Activated CD4-positive, alpha-beta memory T cell treated with anti-CD3 and anti-CD28 coated beads for 36 hours (primary cell): ENCODE measurements at regions of chr10 and their contacts with region 1.

Region 1: DNA sequence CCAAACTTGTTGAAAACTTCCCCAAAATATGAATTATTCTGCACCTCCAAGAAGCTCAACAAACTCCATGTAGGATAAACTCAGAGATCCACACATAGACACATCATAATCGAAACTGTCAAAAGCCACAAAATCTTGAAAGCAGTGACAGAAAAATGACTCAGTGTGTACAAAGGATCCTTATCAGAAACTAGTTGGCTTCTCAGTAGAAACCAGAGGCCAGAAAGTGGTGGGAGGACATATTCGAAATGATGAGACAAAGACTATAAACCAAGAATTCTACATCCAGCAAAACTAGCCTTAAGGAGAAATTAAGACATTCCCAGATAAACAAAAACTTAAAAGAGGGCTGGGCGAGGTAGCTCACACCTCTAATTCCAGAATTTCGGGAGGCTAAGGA is 38.5 kb downstream of the MCMBP start:
- DNase-seq: no peak
- H3K4me3 Mint-ChIP-seq: no peak overlapping the region
- H3K27ac Mint-ChIP-seq: peak overlapping the region; percentile 52
- H3K4me1 Mint-ChIP-seq: peaks cover 43% of the 10 kb centered on the region
- H3K27me3 Mint-ChIP-seq: no peaks in the 10 kb centered on the region

Region 2: DNA sequence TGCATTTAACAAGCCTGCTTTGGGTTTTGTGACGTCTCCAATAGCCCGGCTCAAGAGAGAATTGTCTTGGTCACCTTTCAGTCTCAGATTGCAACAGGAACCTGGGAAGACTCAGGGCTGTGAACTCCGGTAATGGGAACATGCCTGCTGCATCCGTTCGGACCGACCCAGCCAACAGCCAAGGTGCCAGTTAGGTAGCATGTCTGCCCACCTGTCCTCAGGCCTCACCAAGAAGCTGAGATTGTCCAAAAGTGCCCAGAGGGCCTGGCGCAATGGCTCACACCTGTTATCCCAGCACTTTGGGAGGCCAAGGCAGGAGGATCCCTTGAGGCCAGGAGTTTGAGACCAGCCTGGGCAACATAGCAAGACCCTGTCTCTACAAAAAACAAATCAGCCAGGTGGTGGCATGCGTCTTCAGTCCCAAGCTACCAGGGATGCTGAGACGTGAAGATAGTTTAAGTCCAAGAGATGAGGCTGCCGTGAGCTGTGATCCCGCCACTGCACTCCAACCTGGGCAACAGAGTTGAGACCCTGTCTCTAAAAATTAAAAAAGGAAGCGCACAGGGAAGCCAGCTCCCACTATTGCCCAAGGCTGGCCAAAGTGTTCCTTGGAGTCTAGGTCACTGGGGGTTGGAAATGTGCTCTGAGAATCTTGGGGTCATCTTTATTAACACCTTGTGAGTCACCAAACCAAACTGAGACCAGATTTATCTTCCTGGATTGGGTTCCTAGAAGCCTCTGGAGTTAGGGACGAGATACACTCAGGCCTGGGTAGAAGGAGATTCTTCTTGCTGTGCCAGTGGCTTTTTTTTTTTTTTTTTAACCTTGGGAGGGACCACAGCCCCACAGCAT is 156.1 kb before region 1 on chr10:
- CTCF ChIA-PET with region 1: interaction called, 3 read pairs
- POLR2A ChIA-PET with region 1: no interaction called
- intact Hi-C with region 1: loop called (anchors 2 kb)
- DNase-seq: no peak
- H3K4me3 Mint-ChIP-seq: no peak overlapping the region
- H3K27ac Mint-ChIP-seq: no peak overlapping the region
- H3K4me1 Mint-ChIP-seq: peaks cover 33% of the 10 kb centered on the region
- H3K27me3 Mint-ChIP-seq: no peaks in the 10 kb centered on the region

Region 3: GRCh38 chr10:119705434-119705831 is 128.8 kb before region 1 on chr10:
- CTCF ChIA-PET with region 1: no interaction called
- POLR2A ChIA-PET with region 1: interaction called, 4 read pairs
- intact Hi-C with region 1: loop called (anchors 1 kb)
- DNase-seq: peak; percentile 51
- H3K4me3 Mint-ChIP-seq: peak overlapping the region; percentile 55
- H3K27ac Mint-ChIP-seq: peak overlapping the region; percentile 92
- H3K4me1 Mint-ChIP-seq: peaks cover 79% of the 10 kb centered on the region
- H3K27me3 Mint-ChIP-seq: no peaks in the 10 kb centered on the region

Region 4: DNA sequence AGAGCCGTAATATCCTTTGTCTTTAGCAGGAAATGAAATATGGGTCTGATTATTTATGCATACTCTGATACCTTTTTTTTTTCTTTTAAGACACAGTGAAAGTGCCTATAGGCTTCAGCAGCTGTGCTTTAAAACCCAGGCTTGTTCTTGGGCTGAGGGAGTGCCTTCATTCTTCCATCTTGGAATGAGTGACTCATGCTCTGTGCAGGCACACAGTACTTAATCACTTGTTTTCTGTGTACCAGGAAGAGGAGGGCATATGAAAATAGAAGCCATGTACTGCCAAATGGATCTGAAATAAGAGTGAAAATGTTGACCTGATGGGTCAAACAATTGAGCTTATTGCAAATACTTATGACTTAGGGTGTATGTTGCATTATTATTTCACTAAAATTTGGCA is 96.4 kb before region 1 on chr10:
- CTCF ChIA-PET with region 1: no interaction called
- POLR2A ChIA-PET with region 1: no interaction called
- intact Hi-C with region 1: loop called (anchors 5 kb)
- DNase-seq: peak; percentile 33
- H3K4me3 Mint-ChIP-seq: no peak overlapping the region
- H3K27ac Mint-ChIP-seq: peak overlapping the region; percentile 33
- H3K4me1 Mint-ChIP-seq: peaks cover 40% of the 10 kb centered on the region
- H3K27me3 Mint-ChIP-seq: no peaks in the 10 kb centered on the region

Region 5: GRCh38 chr10:119769886-119770285 is 64.3 kb before region 1 on chr10:
- CTCF ChIA-PET with region 1: no interaction called
- POLR2A ChIA-PET with region 1: no interaction called
- intact Hi-C with region 1: no loop called
- DNase-seq: no peak
- H3K4me3 Mint-ChIP-seq: no peak overlapping the region
- H3K27ac Mint-ChIP-seq: no peak overlapping the region
- H3K4me1 Mint-ChIP-seq: peaks cover 18% of the 10 kb centered on the region
- H3K27me3 Mint-ChIP-seq: no peaks in the 10 kb centered on the region